Left cardiac atrium (tissue), 4 donors: ENCODE measurements at regions of chr1 and their contacts with region 1.

Region 1: DNA sequence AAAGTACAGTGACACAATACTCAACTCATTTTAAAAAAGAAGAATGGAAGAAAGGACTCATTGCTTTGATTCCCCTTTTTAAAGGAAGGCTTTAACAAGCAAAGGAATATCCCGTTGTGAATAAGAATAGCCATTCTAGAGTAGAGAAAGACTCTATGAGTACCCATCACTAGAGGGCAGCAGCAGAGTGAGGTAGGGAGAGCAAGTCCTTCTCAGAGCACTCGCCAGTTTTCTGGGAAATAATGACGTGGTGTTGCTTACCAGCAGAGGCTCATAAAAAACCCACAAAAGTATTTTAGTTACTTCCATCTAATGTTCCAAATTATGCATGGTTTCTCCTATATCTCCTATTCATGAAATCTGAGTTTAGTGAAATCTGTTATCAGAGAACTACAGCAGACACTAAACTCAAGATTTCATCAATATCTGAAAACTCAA is 74.6 kb downstream of the USP24 start:
- DNase-seq: peak; percentile 75
- ATAC-seq: peak; percentile 96 to 98

Region 2: DNA sequence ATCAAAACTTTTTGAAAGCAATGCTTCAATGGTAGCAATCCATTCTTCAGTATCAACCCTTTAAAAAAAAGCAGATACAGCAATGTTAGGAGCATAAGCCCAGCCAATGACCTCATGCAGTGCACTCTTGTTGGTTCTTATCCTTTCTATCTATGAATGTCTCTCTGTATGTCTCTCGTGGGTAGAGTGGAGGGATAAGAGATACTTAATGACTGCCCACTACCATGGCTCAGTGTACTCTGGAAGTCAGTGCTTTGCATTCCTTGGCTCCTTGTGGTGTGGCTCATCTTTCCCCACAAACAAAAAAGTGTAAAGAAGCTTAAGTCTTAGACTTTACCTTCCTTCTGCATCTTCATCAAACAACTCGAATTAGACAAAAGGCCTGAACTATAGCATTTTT is 50.9 kb before region 1 on chr1:
- intact Hi-C with region 1: loop called in 1 of 2 experiments (anchors 10 kb)
- DNase-seq: no peak
- ATAC-seq: no peak

Region 3: GRCh38 chr1:55277377-55278130 is 137.0 kb after region 1 on chr1:
- intact Hi-C with region 1: loop called (anchors 1 to 5 kb)
- DNase-seq: peak; percentile 88
- ATAC-seq: peak; percentile 91 to 92